ENCODE measurements at regions of chr1 and their contacts with region 1.

Region 1: DNA sequence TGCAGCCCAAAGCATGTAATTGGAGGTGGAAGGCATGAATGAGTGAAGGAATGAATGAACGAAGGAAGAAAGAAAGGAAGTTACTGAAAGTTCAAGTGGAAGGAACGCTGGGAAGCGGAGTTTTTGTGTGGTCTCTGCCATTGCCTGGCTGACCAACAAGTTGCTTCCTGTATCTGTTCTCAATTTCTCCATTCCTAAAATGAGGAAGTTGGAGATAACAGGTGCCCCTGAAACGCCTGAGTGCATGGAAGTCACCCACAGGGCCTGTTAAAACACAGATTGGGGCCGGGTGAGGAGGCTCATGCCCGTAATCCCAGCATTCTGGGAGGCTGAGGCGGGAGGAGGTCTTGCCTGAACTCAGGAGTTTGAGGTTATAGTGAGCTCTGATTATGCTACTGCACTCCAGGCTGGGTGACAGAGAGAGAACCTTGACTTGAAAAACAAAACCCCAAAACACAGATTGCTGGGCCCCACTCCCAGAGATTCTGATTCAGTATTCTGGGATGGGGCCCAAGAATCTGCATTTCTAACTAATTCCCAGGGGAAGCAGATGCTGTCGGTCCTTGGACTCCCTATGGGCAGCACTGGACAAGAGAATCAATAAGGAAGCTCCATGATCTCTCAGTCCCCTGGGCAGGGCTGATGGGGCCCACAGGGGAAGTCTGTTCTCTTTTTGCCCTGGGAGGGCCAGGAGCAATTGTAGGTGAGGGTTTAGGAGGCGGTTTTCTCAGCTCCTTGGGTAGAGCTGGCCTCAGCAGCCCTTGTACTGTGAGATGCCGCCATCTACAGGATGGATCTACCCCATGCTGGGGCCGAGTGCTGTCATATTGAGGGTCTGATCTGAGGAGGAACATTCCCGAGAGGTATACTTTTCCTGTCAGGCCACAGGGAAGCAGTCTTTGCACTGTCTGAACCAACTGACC is 3.3 kb upstream of the CNR2 start:
- DNase-seq: peak; percentile 14 to 46 (median 22)
- H3K4me3 ChIP-seq: no peak overlapping the region
- H3K4me3 Mint-ChIP-seq: no peak overlapping the region
- H3K27ac ChIP-seq: no peak overlapping the region
- H3K27ac Mint-ChIP-seq: peak overlapping the region in 1 of 7 donors; percentile 53
- H3K4me1 ChIP-seq: peaks cover 17% of the 10 kb centered on the region
- H3K4me1 Mint-ChIP-seq: peaks cover 6 to 26% (median 16%) of the 10 kb centered on the region in 4 donors
- H3K27me3 ChIP-seq: no peaks in the 10 kb centered on the region
- H3K27me3 Mint-ChIP-seq: peaks cover 0 to 1% of the 10 kb centered on the region in 2 donors

Region 2: GRCh38 chr1:23507507-23507906 is 409.0 kb before region 1 on chr1:
- CTCF ChIA-PET with region 1: no interaction called
- POLR2A ChIA-PET with region 1: no interaction called
- intact Hi-C with region 1: no loop called
- DNase-seq: no peak
- H3K4me3 ChIP-seq: no peak overlapping the region
- H3K4me3 Mint-ChIP-seq: no peak overlapping the region
- H3K27ac ChIP-seq: no peak overlapping the region
- H3K27ac Mint-ChIP-seq: peak overlapping the region in 3 of 7 donors; percentile 47 to 61 (median 48)
- H3K4me1 ChIP-seq: no peaks in the 10 kb centered on the region
- H3K4me1 Mint-ChIP-seq: peaks cover 0 to 2% (median 0%) of the 10 kb centered on the region in 4 donors
- H3K27me3 ChIP-seq: no peaks in the 10 kb centered on the region
- H3K27me3 Mint-ChIP-seq: no peaks in the 10 kb centered on the region

Region 3: GRCh38 chr1:23809751-23810171 is 106.7 kb before region 1 on chr1:
- CTCF ChIA-PET with region 1: interaction called, 10 read pairs
- POLR2A ChIA-PET with region 1: interaction called, 3 read pairs
- intact Hi-C with region 1: loop called (anchors 1 kb)
- DNase-seq: peak; percentile 79 to 84 (median 81)
- H3K4me3 ChIP-seq: no peak overlapping the region
- H3K4me3 Mint-ChIP-seq: no peak overlapping the region
- H3K27ac ChIP-seq: no peak overlapping the region
- H3K27ac Mint-ChIP-seq: peak overlapping the region in 5 of 7 donors; percentile 12 to 80 (median 43)
- H3K4me1 ChIP-seq: peaks cover 9% of the 10 kb centered on the region
- H3K4me1 Mint-ChIP-seq: peaks cover 7 to 20% (median 15%) of the 10 kb centered on the region in 4 donors
- H3K27me3 ChIP-seq: no peaks in the 10 kb centered on the region
- H3K27me3 Mint-ChIP-seq: no peaks in the 10 kb centered on the region